Transverse colon (tissue), 4 donors: ENCODE measurements at regions of chr18 and their contacts with region 1.

Region 1: GRCh38 chr18:22169007-22169864 is at the start of gene GATA6:
- DNase-seq: peak; percentile 91
- H3K4me3 ChIP-seq: peak within 1 kb of the TSS; percentile 37 to 86 (median 80)
- H3K27ac ChIP-seq: peak within 1 kb of the TSS; percentile 91 to 96 (median 94)
- H3K4me1 ChIP-seq: peaks cover 0 to 32% (median 16%) of the 10 kb centered on the region in 4 donors
- H3K27me3 ChIP-seq: peaks cover 98% of the 10 kb centered on the region
- CTCF ChIP-seq: peak in 3 of 5 experiments; percentile 11 to 46 (median 39)
- EP300 ChIP-seq: no peak
- POLR2A ChIP-seq: peak; percentile 98
- total RNA-seq, gene GATA6: 49.7 to 223 (median 65.7) TPM

Region 2: GRCh38 chr18:21740724-21741510 is 428.3 kb before region 1 on chr18 and contains the start of gene MIB1:
- in situ Hi-C with region 1: no loop called
- intact Hi-C with region 1: no loop called
- DNase-seq: peak; percentile 58
- H3K4me3 ChIP-seq: peak within 1 kb of the TSS; percentile 81 to 99 (median 92)
- H3K27ac ChIP-seq: peak within 1 kb of the TSS; percentile 93 to 97 (median 97)
- H3K4me1 ChIP-seq: peaks cover 0 to 29% (median 13%) of the 10 kb centered on the region in 4 donors
- H3K27me3 ChIP-seq: no peaks in the 10 kb centered on the region
- CTCF ChIP-seq: peak in 1 of 5 experiments; percentile 8
- EP300 ChIP-seq: no peak
- POLR2A ChIP-seq: peak; percentile 82
- total RNA-seq, gene MIB1: 15.7 to 31.8 (median 27.6) TPM

Region 3: DNA sequence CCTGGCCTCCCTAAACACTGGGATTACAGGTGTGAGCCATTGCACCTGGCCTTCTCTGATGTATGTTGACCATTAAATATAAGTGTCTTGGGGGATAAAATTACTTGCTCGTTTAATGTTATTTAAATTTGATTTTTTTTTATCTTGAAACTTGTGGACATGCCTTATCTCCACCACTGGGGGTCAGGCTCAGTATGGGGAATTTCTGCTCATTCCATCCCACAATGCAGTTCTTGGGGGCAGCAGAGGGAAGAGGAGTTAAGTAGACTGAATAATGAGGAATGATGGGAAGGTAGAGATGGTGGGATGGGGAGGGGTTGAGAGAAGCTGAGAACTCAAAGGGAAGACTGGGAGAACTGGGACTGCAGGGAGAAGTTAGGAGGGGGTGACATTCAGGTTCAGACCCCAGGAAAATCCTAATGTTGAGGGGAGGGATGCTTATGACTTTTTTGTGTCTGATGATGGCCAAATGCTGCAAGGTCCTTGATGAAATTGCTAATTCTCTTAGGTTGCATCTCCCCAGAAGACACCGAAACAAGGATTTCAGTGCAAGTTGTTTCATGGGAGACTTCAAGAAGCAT is 254.4 kb before region 1 on chr18:
- in situ Hi-C with region 1: loop called in 1 of 4 experiments (anchors 25 kb)
- intact Hi-C with region 1: no loop called
- DNase-seq: peak; percentile 19
- H3K4me3 ChIP-seq: no peak overlapping the region
- H3K27ac ChIP-seq: no peak overlapping the region
- H3K4me1 ChIP-seq: peaks cover 0 to 8% (median 0%) of the 10 kb centered on the region in 4 donors
- H3K27me3 ChIP-seq: no peaks in the 10 kb centered on the region
- CTCF ChIP-seq: peak; percentile 34 to 64 (median 50)
- EP300 ChIP-seq: no peak
- POLR2A ChIP-seq: no peak

Region 4: DNA sequence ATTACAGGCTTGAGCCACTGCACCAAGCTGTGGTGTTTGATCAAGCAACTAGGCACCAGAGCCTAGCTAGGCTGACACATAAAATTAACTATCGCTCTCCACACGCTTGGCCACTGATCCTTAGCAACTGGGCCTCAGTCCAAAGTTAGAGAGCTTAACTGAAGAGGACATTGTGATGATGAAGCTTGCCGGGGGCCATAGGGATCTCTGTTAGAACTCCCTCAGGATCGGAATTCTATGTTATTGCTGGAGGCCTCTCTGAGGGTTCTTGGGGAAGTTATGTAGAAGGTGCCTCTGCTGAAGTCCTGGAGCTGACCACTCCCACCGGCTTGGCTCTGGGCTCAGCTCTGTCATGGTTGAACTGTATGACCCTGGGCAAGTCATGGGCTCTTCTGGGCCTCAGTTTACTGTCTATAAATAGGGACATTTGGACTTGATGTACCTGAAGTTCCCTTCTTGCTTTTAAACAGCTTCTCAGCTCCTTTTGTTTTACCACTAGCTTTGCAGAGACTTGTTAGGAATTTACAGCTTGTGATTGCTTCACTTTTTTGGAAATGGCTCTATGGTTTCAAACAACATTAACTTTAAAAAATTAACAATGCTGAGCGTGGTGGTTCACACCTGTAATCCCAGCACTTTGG is 44.2 kb after region 1 on chr18:
- in situ Hi-C with region 1: no loop called
- intact Hi-C with region 1: no loop called
- DNase-seq: no peak
- H3K4me3 ChIP-seq: no peak overlapping the region
- H3K27ac ChIP-seq: no peak overlapping the region
- H3K4me1 ChIP-seq: peaks cover 0 to 16% (median 0%) of the 10 kb centered on the region in 4 donors
- H3K27me3 ChIP-seq: no peaks in the 10 kb centered on the region
- CTCF ChIP-seq: no peak
- EP300 ChIP-seq: no peak
- POLR2A ChIP-seq: no peak

Region 5: GRCh38 chr18:22683196-22683676 is 514.0 kb after region 1 on chr18:
- in situ Hi-C with region 1: loop called in 1 of 4 experiments (anchors 25 kb)
- intact Hi-C with region 1: no loop called
- DNase-seq: peak; percentile 95
- H3K4me3 ChIP-seq: no peak overlapping the region
- H3K27ac ChIP-seq: peak overlapping the region; percentile 81 to 84 (median 82)
- H3K4me1 ChIP-seq: peaks cover 13 to 59% (median 32%) of the 10 kb centered on the region in 4 donors
- H3K27me3 ChIP-seq: no peaks in the 10 kb centered on the region
- CTCF ChIP-seq: peak in 1 of 5 experiments; percentile 3
- EP300 ChIP-seq: peak; percentile 86
- POLR2A ChIP-seq: no peak

Region 6: DNA sequence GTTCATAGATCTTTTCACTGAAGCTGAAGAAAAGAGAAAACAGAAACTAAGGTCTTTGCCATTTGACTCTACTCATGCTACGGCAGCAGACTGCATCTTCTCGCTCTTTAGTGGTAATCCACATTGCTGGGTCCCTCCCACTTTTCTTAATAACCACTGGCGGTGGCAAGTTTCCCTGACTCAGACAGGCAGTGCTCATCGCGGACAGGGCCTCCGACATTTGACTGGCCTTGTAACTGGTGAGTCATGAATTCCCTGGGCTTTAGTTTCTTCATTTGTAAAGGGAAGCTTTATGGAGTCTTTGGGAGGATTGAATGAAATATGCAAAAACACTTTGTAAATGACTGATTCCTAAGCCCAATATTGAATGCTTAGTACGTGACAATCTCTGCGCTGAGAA is 525.7 kb after region 1 on chr18:
- in situ Hi-C with region 1: loop called in 1 of 4 experiments (anchors 25 kb)
- intact Hi-C with region 1: loop called (anchors 10 kb)
- DNase-seq: no peak
- H3K4me3 ChIP-seq: no peak overlapping the region
- H3K27ac ChIP-seq: no peak overlapping the region
- H3K4me1 ChIP-seq: peaks cover 0 to 3% (median 0%) of the 10 kb centered on the region in 4 donors
- H3K27me3 ChIP-seq: no peaks in the 10 kb centered on the region
- CTCF ChIP-seq: no peak
- EP300 ChIP-seq: no peak
- POLR2A ChIP-seq: no peak